H1 (cell line): ENCODE measurements at regions of chr1 and their contacts with region 1.

Region 1: GRCh38 chr1:167220537-167221125 is at the start of gene POU2F1:
- DNase-seq: peak; percentile 97 to 99
- H3K4me3 ChIP-seq: peak within 1 kb of the TSS; percentile 69 to 84 (median 74)
- H3K27ac ChIP-seq: peak within 1 kb of the TSS; percentile 99
- H3K4me1 ChIP-seq: peaks cover 0 to 18% (median 0%) of the 10 kb centered on the region in 4 experiments; a peak in 4 of 7 replicates
- H3K27me3 ChIP-seq: no peaks in the 10 kb centered on the region
- CTCF ChIP-seq: peak; percentile 41 to 70 (median 53)
- EP300 ChIP-seq: no peak
- POLR2A ChIP-seq: peak; percentile 71 to 89; a peak in 2 of 3 replicates
- RAD21 ChIP-seq: peak; percentile 44 to 70
- total RNA-seq, gene POU2F1: 55.1 and 57.2 TPM in 2 replicates

Region 2: GRCh38 chr1:167066333-167067122 is 154.1 kb before region 1 on chr1:
- CTCF ChIA-PET with region 1: interaction called, 18 read pairs
- POLR2A ChIA-PET with region 1: interaction called, 18 read pairs
- DNase-seq: peak; percentile 29 to 97
- H3K4me3 ChIP-seq: peak overlapping the region in 2 of 4 experiments; percentile 14 to 44; a peak in 4 of 8 replicates
- H3K27ac ChIP-seq: no peak overlapping the region
- H3K4me1 ChIP-seq: peaks cover 0 to 2% (median 0%) of the 10 kb centered on the region in 4 experiments; a peak in 1 of 7 replicates
- H3K27me3 ChIP-seq: no peaks in the 10 kb centered on the region
- CTCF ChIP-seq: peak; percentile 84 to 94 (median 93)
- EP300 ChIP-seq: no peak
- POLR2A ChIP-seq: no peak
- RAD21 ChIP-seq: peak; percentile 97 to 100

Region 3: GRCh38 chr1:167136191-167136614 is 84.4 kb before region 1 on chr1:
- CTCF ChIA-PET with region 1: interaction called, 6 read pairs
- POLR2A ChIA-PET with region 1: interaction called, 14 read pairs
- DNase-seq: no peak
- H3K4me3 ChIP-seq: no peak overlapping the region
- H3K27ac ChIP-seq: no peak overlapping the region
- H3K4me1 ChIP-seq: peaks cover 2 to 18% (median 11%) of the 10 kb centered on the region in 4 experiments; a peak in 5 of 7 replicates
- H3K27me3 ChIP-seq: no peaks in the 10 kb centered on the region
- CTCF ChIP-seq: no peak
- EP300 ChIP-seq: no peak
- POLR2A ChIP-seq: no peak
- RAD21 ChIP-seq: no peak

Region 4: GRCh38 chr1:167165948-167166689 is 54.5 kb before region 1 on chr1:
- CTCF ChIA-PET with region 1: interaction called, 9 read pairs
- POLR2A ChIA-PET with region 1: interaction called, 26 read pairs
- DNase-seq: peak; percentile 73 to 77
- H3K4me3 ChIP-seq: peak overlapping the region in 3 of 4 experiments; percentile 0 to 43 (median 4); a peak in 3 of 8 replicates
- H3K27ac ChIP-seq: peak overlapping the region; percentile 70
- H3K4me1 ChIP-seq: peaks cover 6 to 28% (median 23%) of the 10 kb centered on the region in 4 experiments
- H3K27me3 ChIP-seq: no peaks in the 10 kb centered on the region
- CTCF ChIP-seq: no peak
- EP300 ChIP-seq: peak in 1 of 2 experiments; percentile 35; a peak in 1 of 3 replicates
- POLR2A ChIP-seq: peak in 1 of 2 experiments; percentile 72; a peak in 2 of 3 replicates
- RAD21 ChIP-seq: peak in 1 of 2 experiments; percentile 4; a peak in 1 of 4 replicates

Region 5: DNA sequence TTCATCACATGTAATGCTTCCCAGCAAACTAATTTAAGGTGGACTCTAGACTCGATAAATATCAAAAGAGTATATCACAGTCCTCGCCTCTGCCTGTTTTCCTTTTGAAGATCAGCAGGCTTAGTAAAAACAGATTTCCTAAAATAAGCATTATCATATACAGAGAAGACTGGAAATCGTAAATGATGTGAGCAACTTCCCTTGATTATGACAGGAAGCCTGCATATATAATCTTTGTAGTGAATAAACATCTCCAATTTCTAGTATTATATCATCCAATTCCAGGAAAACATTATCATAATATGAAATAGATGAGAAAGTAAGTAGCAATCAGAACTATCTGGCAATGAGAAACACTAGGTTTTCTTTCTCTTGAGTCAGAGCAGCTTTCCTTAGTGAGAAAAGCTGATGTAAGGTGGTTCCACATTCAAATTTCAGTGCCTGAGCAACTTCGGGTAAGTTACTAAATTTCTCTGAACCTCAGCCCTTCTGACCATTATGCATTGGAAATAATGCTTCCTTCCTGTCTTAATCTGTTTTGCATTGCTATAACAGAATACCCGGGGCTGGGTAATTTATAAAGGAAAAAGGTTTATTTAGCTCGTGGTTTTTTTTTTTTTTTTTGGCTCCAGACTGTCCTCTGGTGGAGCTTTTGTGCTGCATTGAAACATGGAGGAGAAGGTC is 12.5 kb before region 1 on chr1:
- CTCF ChIA-PET with region 1: interaction called, 18 read pairs
- POLR2A ChIA-PET with region 1: interaction called, 22 read pairs
- DNase-seq: no peak
- H3K4me3 ChIP-seq: no peak overlapping the region
- H3K27ac ChIP-seq: no peak overlapping the region
- H3K4me1 ChIP-seq: peaks cover 3 to 7% (median 6%) of the 10 kb centered on the region in 4 experiments; a peak in 6 of 7 replicates
- H3K27me3 ChIP-seq: no peaks in the 10 kb centered on the region
- CTCF ChIP-seq: peak in 2 of 3 experiments; percentile 31 to 40; a peak in 2 of 4 replicates
- EP300 ChIP-seq: no peak
- POLR2A ChIP-seq: no peak
- RAD21 ChIP-seq: peak; percentile 39 to 57

Region 6: DNA sequence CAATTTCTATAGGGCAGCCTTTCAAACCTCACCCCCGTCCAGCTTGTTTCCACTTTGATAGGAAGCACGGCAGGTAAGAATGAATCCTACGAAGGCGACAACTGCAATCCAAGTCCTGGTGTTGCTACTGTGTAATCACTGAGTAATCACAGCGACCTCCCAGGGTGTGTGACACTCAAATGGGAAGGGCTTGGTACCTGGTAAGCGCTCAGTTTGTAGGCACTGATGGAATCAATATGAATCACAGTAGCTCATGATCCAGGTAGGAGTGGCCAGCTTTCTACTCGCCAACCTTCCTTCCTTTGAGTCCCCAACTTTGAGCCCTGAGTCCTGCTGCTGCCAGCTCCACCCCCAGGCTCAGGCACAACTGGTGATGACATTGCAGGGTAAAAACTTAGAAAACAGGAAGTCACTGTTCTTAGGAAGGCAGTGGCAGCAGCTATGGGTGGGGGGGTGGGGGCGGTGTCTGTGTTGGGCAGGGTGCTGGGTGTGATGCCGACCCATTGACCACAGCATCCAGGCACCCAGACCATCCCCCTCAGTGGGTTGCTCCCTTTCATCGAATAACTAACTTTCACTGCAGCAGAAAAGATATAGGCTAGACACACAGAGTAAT is 227.0 kb after region 1 on chr1:
- CTCF ChIA-PET with region 1: no interaction called
- POLR2A ChIA-PET with region 1: no interaction called
- DNase-seq: no peak
- H3K4me3 ChIP-seq: no peak overlapping the region
- H3K27ac ChIP-seq: no peak overlapping the region
- H3K4me1 ChIP-seq: peaks cover 0 to 4% (median 2%) of the 10 kb centered on the region in 4 experiments; a peak in 5 of 7 replicates
- H3K27me3 ChIP-seq: no peaks in the 10 kb centered on the region; a peak in 1 of 7 replicates
- CTCF ChIP-seq: no peak
- EP300 ChIP-seq: no peak
- POLR2A ChIP-seq: no peak
- RAD21 ChIP-seq: no peak